Activated B cell treated with CpG ODN at 0.5 μM for 24 hours (primary cell): ENCODE measurements at regions of chr3 and their contacts with region 1.

Region 1: DNA sequence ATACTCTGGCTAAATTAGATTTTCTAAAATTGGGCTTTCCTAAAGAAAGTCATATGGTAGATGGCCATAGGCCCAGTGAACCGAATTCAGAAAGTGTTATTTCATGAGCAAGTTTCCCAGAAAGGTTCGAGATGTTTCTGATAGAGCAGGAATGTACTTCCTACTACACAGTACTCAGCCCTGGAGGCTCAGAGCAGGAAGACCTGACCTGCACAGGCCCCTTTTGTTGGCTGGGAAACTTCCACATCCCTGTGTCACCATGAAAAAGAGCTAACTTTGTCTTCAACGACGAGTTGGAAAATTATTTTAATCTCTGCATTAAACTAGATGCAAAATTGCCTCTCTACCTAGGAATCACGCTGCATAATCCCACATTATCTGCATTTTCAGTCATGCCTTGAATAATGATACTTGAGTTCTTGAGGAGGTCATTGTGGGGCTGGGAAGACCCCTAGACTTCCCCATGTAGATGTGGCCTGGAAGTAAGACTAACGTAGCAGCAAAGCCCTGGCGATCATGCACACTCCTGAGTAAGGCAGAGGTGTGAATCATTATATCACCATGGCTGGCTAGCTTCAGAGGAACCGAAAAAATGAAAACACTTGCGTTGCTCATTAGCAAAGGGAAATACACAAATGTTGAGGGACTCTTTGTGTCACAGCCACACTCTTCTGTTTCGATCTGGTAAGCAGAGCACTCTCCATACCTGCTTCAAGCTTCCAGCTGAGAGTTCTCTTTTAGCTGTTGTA is 47.1 kb downstream of the CMTM7 start:
- DNase-seq: no peak
- ATAC-seq: peak; percentile 76
- H3K4me3 Mint-ChIP-seq: peak overlapping the region; percentile 76
- H3K27ac Mint-ChIP-seq: peak overlapping the region; percentile 94
- H3K4me1 Mint-ChIP-seq: peaks cover 96% of the 10 kb centered on the region
- H3K27me3 Mint-ChIP-seq: no peaks in the 10 kb centered on the region
- CTCF ChIP-seq: no peak

Region 2: DNA sequence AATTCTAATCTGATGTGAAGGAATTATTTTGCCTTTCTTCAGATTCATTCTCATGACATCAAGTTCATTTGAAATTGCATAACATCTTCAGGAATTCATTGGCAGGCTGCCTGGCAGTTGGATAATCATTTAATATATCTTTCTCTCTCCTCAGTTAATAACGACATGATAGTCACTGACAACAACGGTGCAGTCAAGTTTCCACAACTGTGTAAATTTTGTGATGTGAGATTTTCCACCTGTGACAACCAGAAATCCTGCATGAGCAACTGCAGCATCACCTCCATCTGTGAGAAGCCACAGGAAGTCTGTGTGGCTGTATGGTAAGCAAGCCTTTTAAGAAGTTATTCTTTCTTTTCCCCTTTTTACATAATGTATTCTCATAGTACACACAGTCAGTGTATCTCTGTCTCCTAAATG is 1794.2 kb before region 1 on chr3:
- CTCF ChIA-PET with region 1: no interaction called
- POLR2A ChIA-PET with region 1: no interaction called
- intact Hi-C with region 1: loop called (anchors 10 kb)
- DNase-seq: no peak
- ATAC-seq: peak; percentile 38
- H3K4me3 Mint-ChIP-seq: peak overlapping the region; percentile 68
- H3K27ac Mint-ChIP-seq: peak overlapping the region; percentile 91
- H3K4me1 Mint-ChIP-seq: peaks cover 98% of the 10 kb centered on the region
- H3K27me3 Mint-ChIP-seq: no peaks in the 10 kb centered on the region
- CTCF ChIP-seq: no peak

Region 3: GRCh38 chr3:32353351-32353750 is 85.4 kb before region 1 on chr3:
- CTCF ChIA-PET with region 1: no interaction called
- POLR2A ChIA-PET with region 1: no interaction called
- intact Hi-C with region 1: no loop called
- DNase-seq: no peak
- ATAC-seq: no peak
- H3K4me3 Mint-ChIP-seq: no peak overlapping the region
- H3K27ac Mint-ChIP-seq: no peak overlapping the region
- H3K4me1 Mint-ChIP-seq: no peaks in the 10 kb centered on the region
- H3K27me3 Mint-ChIP-seq: no peaks in the 10 kb centered on the region
- CTCF ChIP-seq: no peak

Region 4: DNA sequence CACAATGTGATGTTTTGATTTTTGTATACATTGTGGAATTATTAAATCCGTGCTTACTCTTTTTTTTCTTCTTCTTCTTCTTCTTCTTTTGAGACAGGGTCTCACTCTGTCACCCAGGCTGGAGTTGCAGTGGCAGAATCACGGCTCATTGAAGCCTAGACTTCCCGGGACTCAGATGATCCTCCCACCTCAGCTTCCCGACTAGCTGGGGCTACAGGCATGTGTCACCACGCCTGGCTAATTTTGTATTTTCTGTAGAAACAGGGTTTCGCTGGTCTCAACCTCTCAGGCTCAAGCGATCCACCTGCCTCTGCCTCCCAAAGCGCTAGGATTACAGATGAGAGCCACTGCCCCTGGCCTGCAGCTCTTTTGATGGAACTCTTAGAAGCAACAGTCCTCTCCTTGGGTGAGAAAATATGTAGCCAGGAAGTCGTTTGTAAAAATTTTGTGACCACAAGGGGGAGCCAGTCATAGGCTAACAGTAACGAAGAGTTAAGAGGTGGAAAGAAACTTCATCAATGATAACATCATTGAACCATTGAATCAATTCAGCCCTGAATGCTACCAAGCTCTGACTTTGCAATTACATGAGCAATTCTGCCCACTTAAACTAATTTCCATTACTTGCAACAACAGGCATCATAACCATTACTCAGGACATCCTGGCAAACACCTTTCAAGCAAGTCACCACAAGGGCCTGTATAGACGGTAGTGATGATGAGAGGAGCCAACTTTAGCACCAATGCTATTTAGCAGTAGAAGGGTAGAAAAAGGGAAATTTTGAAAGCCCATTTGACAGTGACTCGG is 63.8 kb before region 1 on chr3:
- CTCF ChIA-PET with region 1: interaction called, 8 read pairs
- POLR2A ChIA-PET with region 1: interaction called, 7 read pairs
- intact Hi-C with region 1: loop called (anchors 1 kb)
- DNase-seq: peak; percentile 18
- ATAC-seq: peak; percentile 75
- H3K4me3 Mint-ChIP-seq: no peak overlapping the region
- H3K27ac Mint-ChIP-seq: peak overlapping the region; percentile 50
- H3K4me1 Mint-ChIP-seq: peaks cover 28% of the 10 kb centered on the region
- H3K27me3 Mint-ChIP-seq: no peaks in the 10 kb centered on the region
- CTCF ChIP-seq: no peak

Region 5: DNA sequence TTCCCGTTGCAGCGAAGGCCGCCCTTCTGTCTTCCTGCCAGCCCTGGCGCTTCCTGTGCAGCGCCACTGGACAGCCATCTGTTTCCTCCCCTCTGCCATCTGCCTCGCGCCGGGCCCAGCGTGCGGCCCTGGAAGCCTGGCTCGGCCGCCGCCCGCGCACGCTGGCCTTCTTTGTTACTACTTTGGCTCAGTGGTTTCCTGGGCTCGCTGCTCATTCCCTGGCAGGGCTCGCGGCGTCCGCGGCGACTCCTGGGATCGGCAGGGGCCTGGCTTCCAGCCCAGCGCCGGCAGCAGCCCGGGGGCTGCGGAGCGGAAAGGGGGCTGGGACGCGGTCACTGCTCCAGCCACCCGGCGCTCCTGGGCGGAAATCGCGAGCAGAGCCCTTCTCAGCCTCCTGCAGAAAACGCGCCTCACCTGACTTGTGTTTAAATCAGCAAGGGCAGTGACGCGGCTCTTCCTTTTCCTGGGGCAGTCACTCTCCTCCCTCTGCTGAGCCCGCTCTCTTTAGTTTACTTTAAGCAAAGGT is 37.2 kb before region 1 on chr3:
- CTCF ChIA-PET with region 1: interaction called, 4 read pairs
- POLR2A ChIA-PET with region 1: interaction called, 8 read pairs
- intact Hi-C with region 1: loop called (anchors 1 kb)
- DNase-seq: peak; percentile 45
- ATAC-seq: peak; percentile 71
- H3K4me3 Mint-ChIP-seq: peak overlapping the region; percentile 89
- H3K27ac Mint-ChIP-seq: peak overlapping the region; percentile 97
- H3K4me1 Mint-ChIP-seq: peaks cover 86% of the 10 kb centered on the region
- H3K27me3 Mint-ChIP-seq: no peaks in the 10 kb centered on the region
- CTCF ChIP-seq: no peak

Region 6: DNA sequence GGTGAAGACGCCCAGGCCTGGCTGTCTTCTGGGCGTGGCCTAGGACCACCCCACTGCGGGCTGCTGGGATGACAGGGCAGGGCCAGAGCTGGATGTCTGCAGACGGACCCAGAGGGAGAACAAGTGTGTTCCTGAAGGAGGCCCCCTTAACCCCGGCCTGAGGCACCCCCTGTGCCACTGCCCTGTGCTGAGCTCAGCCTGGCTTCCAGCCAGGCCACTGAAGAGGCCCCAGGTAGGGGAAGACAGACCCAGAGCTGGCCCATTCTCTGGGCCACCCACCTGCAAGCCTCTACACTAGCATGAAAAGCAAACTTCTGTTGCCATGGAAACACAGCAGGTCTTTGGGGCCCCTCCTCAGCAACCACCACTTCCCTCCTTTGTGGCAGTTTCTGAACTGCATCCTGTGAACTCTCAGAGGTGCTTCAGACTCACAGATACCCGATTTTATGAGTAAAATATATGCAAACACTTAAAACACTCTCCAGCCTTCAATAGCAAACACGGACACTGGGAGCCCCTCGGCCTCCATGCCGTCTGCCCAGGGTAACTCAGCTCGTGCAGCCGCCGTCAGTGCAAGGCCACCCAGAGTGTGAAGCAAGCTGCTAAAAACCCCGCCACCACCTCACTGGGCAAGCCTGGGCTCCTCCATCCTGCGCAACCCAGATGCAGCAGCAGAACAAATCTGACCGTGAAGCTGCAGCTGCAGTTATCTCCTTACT is 21.4 kb after region 1 on chr3:
- CTCF ChIA-PET with region 1: interaction called, 7 read pairs
- POLR2A ChIA-PET with region 1: interaction called, 93 read pairs
- intact Hi-C with region 1: loop called (anchors 1 kb)
- DNase-seq: peak; percentile 61
- ATAC-seq: peak; percentile 72
- H3K4me3 Mint-ChIP-seq: peak overlapping the region; percentile 74
- H3K27ac Mint-ChIP-seq: no peak overlapping the region
- H3K4me1 Mint-ChIP-seq: peaks cover 55% of the 10 kb centered on the region
- H3K27me3 Mint-ChIP-seq: no peaks in the 10 kb centered on the region
- CTCF ChIP-seq: no peak

Region 7: DNA sequence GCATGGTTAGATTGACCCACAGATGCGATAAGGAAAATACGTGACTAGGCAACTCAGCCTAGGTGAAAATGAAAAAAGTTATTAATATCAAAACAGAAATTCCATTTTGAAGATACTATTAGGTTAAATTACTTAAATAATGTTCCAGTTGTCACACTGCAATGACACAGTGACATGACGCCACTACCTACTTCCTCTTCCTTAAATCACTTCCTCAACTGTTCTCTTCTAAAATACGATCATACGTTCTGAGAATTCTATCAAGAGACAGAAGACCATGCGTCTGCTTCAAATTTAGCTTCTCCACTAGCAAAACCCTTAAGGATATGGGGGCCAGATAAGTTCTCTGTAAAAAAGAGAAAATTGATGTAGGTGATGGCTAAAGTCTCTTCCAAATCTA is 45.7 kb after region 1 on chr3:
- CTCF ChIA-PET with region 1: no interaction called
- POLR2A ChIA-PET with region 1: interaction called, 11 read pairs
- intact Hi-C with region 1: loop called (anchors 1 kb)
- DNase-seq: no peak
- ATAC-seq: peak; percentile 93
- H3K4me3 Mint-ChIP-seq: peak overlapping the region; percentile 65
- H3K27ac Mint-ChIP-seq: peak overlapping the region; percentile 86
- H3K4me1 Mint-ChIP-seq: peaks cover 57% of the 10 kb centered on the region
- H3K27me3 Mint-ChIP-seq: no peaks in the 10 kb centered on the region
- CTCF ChIP-seq: no peak

Region 8: GRCh38 chr3:32570421-32571191 is 131.8 kb after region 1 on chr3 and contains the start of gene DYNC1LI1:
- CTCF ChIA-PET with region 1: no interaction called
- POLR2A ChIA-PET with region 1: no interaction called
- intact Hi-C with region 1: loop called (anchors 5 kb)
- DNase-seq: peak; percentile 96
- ATAC-seq: peak; percentile 95
- H3K4me3 Mint-ChIP-seq: peak within 1 kb of the TSS; percentile 94
- H3K27ac Mint-ChIP-seq: peak within 1 kb of the TSS; percentile 93
- H3K4me1 Mint-ChIP-seq: peaks cover 32% of the 10 kb centered on the region
- H3K27me3 Mint-ChIP-seq: no peaks in the 10 kb centered on the region
- CTCF ChIP-seq: no peak
- total RNA-seq, gene DYNC1LI1: 32.6 and 38.8 TPM in 2 replicates